ENCODE measurements at regions of chr20 and their contacts with region 1.

Region 1: GRCh38 chr20:561437-562231 is 18.0 kb upstream of the CSNK2A1 start:
- DNase-seq: peak; percentile 73
- ATAC-seq: peak; percentile 95
- H3K4me3 ChIP-seq: no peak overlapping the region
- H3K27ac ChIP-seq: no peak overlapping the region
- H3K4me1 ChIP-seq: 0 out of 4 replicates have a peak, but pooled peaks cover 0 to 3% of the 10 kb centered on the region in 2 experiments
- H3K27me3 ChIP-seq: no peaks in the 10 kb centered on the region
- CTCF ChIP-seq: peak; percentile 95 to 96 (median 95)
- POLR2A ChIP-seq: no peak
- RAD21 ChIP-seq: peak; percentile 96

Region 2: GRCh38 chr20:251354-251753 is 310.3 kb before region 1 on chr20:
- CTCF ChIA-PET with region 1: no interaction called
- POLR2A ChIA-PET with region 1: no interaction called
- RAD21 ChIA-PET with region 1: no interaction called
- intact Hi-C with region 1: no loop called
- DNase-seq: no peak
- ATAC-seq: no peak
- H3K4me3 ChIP-seq: no peak overlapping the region
- H3K27ac ChIP-seq: no peak overlapping the region
- H3K4me1 ChIP-seq: no peaks in the 10 kb centered on the region
- H3K27me3 ChIP-seq: no peaks in the 10 kb centered on the region
- CTCF ChIP-seq: no peak
- POLR2A ChIP-seq: no peak
- RAD21 ChIP-seq: no peak

Region 3: GRCh38 chr20:460707-461106 is 100.9 kb before region 1 on chr20:
- CTCF ChIA-PET with region 1: no interaction called
- POLR2A ChIA-PET with region 1: no interaction called
- RAD21 ChIA-PET with region 1: no interaction called
- intact Hi-C with region 1: no loop called
- DNase-seq: no peak
- ATAC-seq: no peak
- H3K4me3 ChIP-seq: peak overlapping the region in 1 of 2 experiments; percentile 81; a peak in 3 of 4 replicates
- H3K27ac ChIP-seq: no peak overlapping the region
- H3K4me1 ChIP-seq: peaks cover 7 to 15% of the 10 kb centered on the region in 2 experiments; a peak in 3 of 4 replicates
- H3K27me3 ChIP-seq: no peaks in the 10 kb centered on the region
- CTCF ChIP-seq: no peak
- POLR2A ChIP-seq: no peak
- RAD21 ChIP-seq: no peak

Region 4: GRCh38 chr20:645318-646106 is 83.9 kb after region 1 on chr20:
- CTCF ChIA-PET with region 1: interaction called, 29 read pairs
- POLR2A ChIA-PET with region 1: interaction called, 5 read pairs
- RAD21 ChIA-PET with region 1: interaction called, 4 to 6 read pairs
- intact Hi-C with region 1: loop called (anchors 1 kb)
- DNase-seq: peak; percentile 41
- ATAC-seq: peak; percentile 88
- H3K4me3 ChIP-seq: no peak overlapping the region
- H3K27ac ChIP-seq: peak overlapping the region; percentile 16
- H3K4me1 ChIP-seq: peaks cover 13 to 32% of the 10 kb centered on the region in 2 experiments
- H3K27me3 ChIP-seq: no peaks in the 10 kb centered on the region
- CTCF ChIP-seq: peak; percentile 78 to 94 (median 93)
- POLR2A ChIP-seq: no peak
- RAD21 ChIP-seq: peak; percentile 84

Region 5: DNA sequence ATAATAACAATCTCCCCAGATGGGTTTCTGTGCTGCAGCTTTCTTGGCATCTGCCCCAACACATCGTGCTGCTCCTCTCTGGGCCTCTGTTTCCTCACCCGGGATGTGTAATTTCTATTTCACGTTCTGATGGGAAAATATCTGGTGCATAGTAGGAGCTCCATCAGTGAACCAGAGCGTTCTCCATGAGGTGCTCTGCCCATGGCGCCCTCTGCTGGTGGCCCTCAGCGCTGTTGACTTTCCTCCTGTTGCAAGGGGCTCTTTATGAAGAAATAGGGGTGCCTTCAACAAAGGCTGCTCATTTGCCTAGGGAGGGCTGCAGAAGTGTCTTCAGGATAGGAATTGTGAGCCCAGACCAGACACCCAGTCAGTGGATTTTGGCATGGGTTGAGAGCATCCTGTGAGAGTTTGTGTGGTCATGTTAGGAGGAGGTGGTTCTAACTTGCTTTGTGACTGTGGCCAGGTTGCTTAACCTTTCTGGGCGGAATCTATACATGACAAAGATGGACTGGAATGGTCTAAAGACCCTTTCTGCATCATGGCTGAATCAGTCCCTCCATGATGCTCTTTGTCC is 105.8 kb after region 1 on chr20:
- CTCF ChIA-PET with region 1: interaction called, 9 read pairs
- POLR2A ChIA-PET with region 1: no interaction called
- RAD21 ChIA-PET with region 1: no interaction called
- intact Hi-C with region 1: loop called (anchors 1 kb)
- DNase-seq: no peak
- ATAC-seq: peak; percentile 87
- H3K4me3 ChIP-seq: no peak overlapping the region
- H3K27ac ChIP-seq: no peak overlapping the region
- H3K4me1 ChIP-seq: peaks cover 9 to 10% of the 10 kb centered on the region in 2 experiments; a peak in 3 of 4 replicates
- H3K27me3 ChIP-seq: no peaks in the 10 kb centered on the region
- CTCF ChIP-seq: peak; percentile 89 to 99 (median 97)
- POLR2A ChIP-seq: no peak
- RAD21 ChIP-seq: peak; percentile 68

Region 6: GRCh38 chr20:740141-740540 is 178.5 kb after region 1 on chr20:
- CTCF ChIA-PET with region 1: interaction called, 12 read pairs
- POLR2A ChIA-PET with region 1: no interaction called
- RAD21 ChIA-PET with region 1: interaction called in 1 of 2 experiments, 3 read pairs
- intact Hi-C with region 1: loop called (anchors 1 kb)
- DNase-seq: no peak
- ATAC-seq: no peak
- H3K4me3 ChIP-seq: no peak overlapping the region
- H3K27ac ChIP-seq: no peak overlapping the region
- H3K4me1 ChIP-seq: peaks cover 0 to 7% of the 10 kb centered on the region in 2 experiments; a peak in 1 of 4 replicates
- H3K27me3 ChIP-seq: no peaks in the 10 kb centered on the region
- CTCF ChIP-seq: no peak
- POLR2A ChIP-seq: no peak
- RAD21 ChIP-seq: no peak

Region 7: GRCh38 chr20:760751-761417 is 199.2 kb after region 1 on chr20:
- CTCF ChIA-PET with region 1: no interaction called
- POLR2A ChIA-PET with region 1: no interaction called
- RAD21 ChIA-PET with region 1: no interaction called
- intact Hi-C with region 1: loop called (anchors 10 kb)
- DNase-seq: peak; percentile 47
- ATAC-seq: peak; percentile 98
- H3K4me3 ChIP-seq: peak overlapping the region in 1 of 2 experiments; percentile 27; a peak in 1 of 4 replicates
- H3K27ac ChIP-seq: no peak overlapping the region
- H3K4me1 ChIP-seq: peaks cover 0 to 18% of the 10 kb centered on the region in 2 experiments; a peak in 2 of 4 replicates
- H3K27me3 ChIP-seq: no peaks in the 10 kb centered on the region
- CTCF ChIP-seq: peak; percentile 70 to 98 (median 97)
- POLR2A ChIP-seq: no peak
- RAD21 ChIP-seq: peak; percentile 51

Region 8: DNA sequence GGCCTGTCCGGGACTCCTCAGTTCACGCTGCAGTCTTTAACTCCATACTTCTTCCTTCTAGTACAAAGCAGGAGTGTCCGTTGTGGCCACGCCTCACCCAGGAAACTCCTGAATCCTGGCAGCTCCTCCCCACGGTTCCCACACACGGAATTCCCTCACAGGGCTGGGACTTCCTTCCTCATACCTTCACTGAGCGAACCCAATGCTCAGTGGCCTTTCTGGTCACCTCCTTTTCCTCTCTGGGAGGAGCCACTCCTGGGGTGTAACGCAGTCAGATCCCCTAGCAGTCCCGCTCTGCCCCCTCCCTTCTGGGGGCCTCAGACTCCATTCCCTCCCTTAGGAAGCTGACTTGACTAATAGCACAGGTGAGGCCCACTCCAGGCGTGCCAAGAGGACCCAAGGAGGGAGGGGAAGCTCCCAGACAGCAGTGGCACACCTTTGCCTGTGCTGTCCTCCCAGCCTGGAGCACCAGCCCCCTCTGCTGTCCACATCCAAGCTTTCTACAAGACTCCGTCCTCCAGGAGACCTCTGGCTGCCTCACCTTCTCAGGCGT is 206.9 kb after region 1 on chr20 and contains the start of gene SLC52A3:
- CTCF ChIA-PET with region 1: interaction called, 10 read pairs
- POLR2A ChIA-PET with region 1: no interaction called
- RAD21 ChIA-PET with region 1: no interaction called
- intact Hi-C with region 1: loop called (anchors 10 kb)
- DNase-seq: peak; percentile 86
- ATAC-seq: peak; percentile 95
- H3K4me3 ChIP-seq: peak within 1 kb of the TSS; percentile 58 to 64
- H3K27ac ChIP-seq: peak within 1 kb of the TSS; percentile 79
- H3K4me1 ChIP-seq: peaks cover 6 to 21% of the 10 kb centered on the region in 2 experiments; a peak in 2 of 4 replicates
- H3K27me3 ChIP-seq: no peaks in the 10 kb centered on the region
- CTCF ChIP-seq: peak; percentile 73 to 81 (median 79)
- POLR2A ChIP-seq: no peak
- RAD21 ChIP-seq: peak; percentile 90
- total RNA-seq, gene SLC52A3: 10.2 TPM

Region 9: GRCh38 chr20:956330-956951 is 394.8 kb after region 1 on chr20:
- CTCF ChIA-PET with region 1: no interaction called
- POLR2A ChIA-PET with region 1: no interaction called
- RAD21 ChIA-PET with region 1: no interaction called
- intact Hi-C with region 1: loop called (anchors 10 kb)
- DNase-seq: peak; percentile 48
- ATAC-seq: peak; percentile 85
- H3K4me3 ChIP-seq: no peak overlapping the region
- H3K27ac ChIP-seq: no peak overlapping the region
- H3K4me1 ChIP-seq: peaks cover 4 to 13% of the 10 kb centered on the region in 2 experiments; a peak in 3 of 4 replicates
- H3K27me3 ChIP-seq: no peaks in the 10 kb centered on the region
- CTCF ChIP-seq: peak; percentile 96 to 99 (median 96)
- POLR2A ChIP-seq: no peak
- RAD21 ChIP-seq: peak; percentile 100

Measured in HCT116 (cell line).